H1 (cell line): ENCODE measurements at regions of chr4 and their contacts with region 1.

Region 1: DNA sequence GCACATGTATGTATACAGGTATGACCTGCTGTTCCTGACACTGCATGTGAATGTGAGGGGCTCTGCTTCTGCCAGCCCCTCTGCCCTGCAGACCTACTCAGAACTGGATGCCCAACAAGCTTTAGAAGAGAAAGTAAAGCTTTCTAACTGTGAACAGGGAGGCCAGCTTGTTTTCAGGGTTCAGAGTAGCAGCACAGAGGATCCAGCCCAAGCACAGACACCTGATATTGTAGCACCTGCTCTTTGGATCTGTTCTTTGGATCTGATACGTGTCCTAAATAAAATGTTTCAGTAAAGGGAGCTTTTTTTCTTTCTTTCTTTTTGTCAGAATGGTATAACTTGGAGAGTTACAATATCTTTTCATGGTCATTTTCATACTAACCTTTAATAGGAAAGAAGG is 19.2 kb downstream of the DCUN1D4 start:
- DNase-seq: no peak
- H3K4me3 ChIP-seq: no peak overlapping the region
- H3K27ac ChIP-seq: no peak overlapping the region
- H3K4me1 ChIP-seq: peaks cover 0 to 4% (median 3%) of the 10 kb centered on the region in 4 experiments; a peak in 4 of 7 replicates
- H3K27me3 ChIP-seq: no peaks in the 10 kb centered on the region
- CTCF ChIP-seq: no peak
- EP300 ChIP-seq: no peak
- POLR2A ChIP-seq: no peak
- RAD21 ChIP-seq: no peak

Region 2: GRCh38 chr4:51885363-51885762 is 23.2 kb after region 1 on chr4:
- CTCF ChIA-PET with region 1: interaction called, 14 read pairs
- POLR2A ChIA-PET with region 1: interaction called, 4 read pairs
- DNase-seq: no peak
- H3K4me3 ChIP-seq: no peak overlapping the region
- H3K27ac ChIP-seq: no peak overlapping the region
- H3K4me1 ChIP-seq: peaks cover 5 to 10% (median 7%) of the 10 kb centered on the region in 4 experiments; a peak in 6 of 7 replicates
- H3K27me3 ChIP-seq: no peaks in the 10 kb centered on the region
- CTCF ChIP-seq: peak in 2 of 3 experiments; percentile 33 to 64; a peak in 2 of 4 replicates
- EP300 ChIP-seq: no peak
- POLR2A ChIP-seq: no peak
- RAD21 ChIP-seq: peak; percentile 43 to 47

Region 3: DNA sequence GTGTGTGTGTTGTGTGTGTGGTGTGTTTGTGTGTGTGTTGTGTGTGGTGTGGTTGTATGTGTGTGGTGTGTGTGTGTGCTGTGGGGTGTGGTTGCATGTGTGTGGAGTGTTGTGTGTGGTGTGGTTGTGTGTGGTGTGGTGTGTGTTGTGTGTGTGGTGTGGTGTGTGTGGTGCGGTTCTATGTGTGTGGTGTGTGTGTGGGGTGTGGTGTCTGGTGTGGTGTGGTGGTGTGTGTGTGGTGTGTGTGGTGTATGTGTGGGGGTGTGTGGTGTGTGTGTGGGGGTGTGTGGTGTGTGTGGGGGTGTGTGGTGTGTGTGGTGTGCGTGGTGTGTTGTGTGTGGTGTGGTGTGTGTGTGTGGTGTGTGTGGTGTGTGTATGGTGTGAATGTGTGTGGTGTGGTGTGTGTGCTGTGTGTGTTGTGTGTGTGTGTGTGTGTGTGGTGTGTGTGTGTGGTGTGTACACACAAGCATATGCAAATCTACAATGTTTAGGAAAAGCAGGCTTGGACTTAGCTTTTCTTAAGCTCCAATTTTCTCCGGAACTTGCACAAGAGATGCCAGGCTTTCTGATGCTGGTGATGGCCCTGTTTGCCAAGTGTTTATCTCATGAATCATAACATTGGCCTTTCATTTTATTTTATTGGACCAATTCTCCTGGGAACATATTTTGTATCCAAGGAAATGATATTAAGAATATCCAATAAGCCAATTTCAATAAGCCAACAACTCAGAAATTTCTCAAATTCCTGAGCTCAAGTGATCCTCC is 337.6 kb after region 1 on chr4:
- CTCF ChIA-PET with region 1: no interaction called
- POLR2A ChIA-PET with region 1: no interaction called
- DNase-seq: no peak
- H3K4me3 ChIP-seq: no peak overlapping the region
- H3K27ac ChIP-seq: no peak overlapping the region
- H3K4me1 ChIP-seq: peaks cover 0 to 10% (median 2%) of the 10 kb centered on the region in 4 experiments; a peak in 2 of 7 replicates
- H3K27me3 ChIP-seq: no peaks in the 10 kb centered on the region
- CTCF ChIP-seq: no peak
- EP300 ChIP-seq: no peak
- POLR2A ChIP-seq: no peak
- RAD21 ChIP-seq: no peak